B cell (primary cell): ENCODE measurements at regions of chr3 and their contacts with region 1.

Region 1: DNA sequence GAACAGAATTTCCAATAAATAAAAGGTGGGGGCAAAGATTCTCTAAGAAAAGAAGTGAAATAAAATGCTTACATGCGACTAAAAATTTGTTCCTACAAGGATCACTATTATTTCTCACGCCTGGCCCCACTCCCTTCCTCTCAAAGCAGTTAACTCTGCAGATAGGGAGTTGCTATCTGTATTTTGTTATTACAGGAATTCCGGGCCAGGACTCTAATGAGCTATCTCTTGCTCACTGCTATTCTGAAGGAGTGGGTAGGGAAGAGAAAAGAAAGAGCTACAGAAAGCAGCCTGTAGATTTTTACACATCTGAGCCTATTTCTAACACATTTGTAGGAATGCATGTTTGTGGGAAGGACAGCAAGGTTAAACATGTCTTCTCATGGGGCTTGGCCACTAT is 140.4 kb downstream of the PCCB start:
- DNase-seq: no peak
- ATAC-seq: no peak
- H3K4me3 ChIP-seq: no peak overlapping the region
- H3K4me3 Mint-ChIP-seq: no peak overlapping the region
- H3K27ac ChIP-seq: no peak overlapping the region
- H3K27ac Mint-ChIP-seq: no peak overlapping the region
- H3K4me1 ChIP-seq: no peaks in the 10 kb centered on the region
- H3K4me1 Mint-ChIP-seq: peaks cover 5% of the 10 kb centered on the region
- H3K27me3 ChIP-seq: no peaks in the 10 kb centered on the region
- H3K27me3 Mint-ChIP-seq: no peaks in the 10 kb centered on the region
- CTCF ChIP-seq: no peak

Region 2: GRCh38 chr3:136818769-136819391 is 428.3 kb after region 1 on chr3 and contains the start of gene SLC35G2:
- CTCF ChIA-PET with region 1: no interaction called
- POLR2A ChIA-PET with region 1: no interaction called
- intact Hi-C with region 1: loop called (anchors 2 kb)
- DNase-seq: peak; percentile 38
- ATAC-seq: peak; percentile 68
- H3K4me3 ChIP-seq: peak within 1 kb of the TSS; percentile 43 to 66 (median 58)
- H3K4me3 Mint-ChIP-seq: peak within 1 kb of the TSS; percentile 95
- H3K27ac ChIP-seq: no peak within 1 kb of the TSS
- H3K27ac Mint-ChIP-seq: peak within 1 kb of the TSS; percentile 89
- H3K4me1 ChIP-seq: peaks cover 21 to 22% of the 10 kb centered on the region in 2 donors
- H3K4me1 Mint-ChIP-seq: peaks cover 23% of the 10 kb centered on the region
- H3K27me3 ChIP-seq: peaks cover 0 to 40% (median 31%) of the 10 kb centered on the region in 4 experiments
- H3K27me3 Mint-ChIP-seq: peaks cover 30% of the 10 kb centered on the region
- CTCF ChIP-seq: no peak
- total RNA-seq, gene SLC35G2: 6.3 and 9.4 TPM in 2 replicates